ENCODE measurements at regions of chr2 and their contacts with region 1.

Region 1: DNA sequence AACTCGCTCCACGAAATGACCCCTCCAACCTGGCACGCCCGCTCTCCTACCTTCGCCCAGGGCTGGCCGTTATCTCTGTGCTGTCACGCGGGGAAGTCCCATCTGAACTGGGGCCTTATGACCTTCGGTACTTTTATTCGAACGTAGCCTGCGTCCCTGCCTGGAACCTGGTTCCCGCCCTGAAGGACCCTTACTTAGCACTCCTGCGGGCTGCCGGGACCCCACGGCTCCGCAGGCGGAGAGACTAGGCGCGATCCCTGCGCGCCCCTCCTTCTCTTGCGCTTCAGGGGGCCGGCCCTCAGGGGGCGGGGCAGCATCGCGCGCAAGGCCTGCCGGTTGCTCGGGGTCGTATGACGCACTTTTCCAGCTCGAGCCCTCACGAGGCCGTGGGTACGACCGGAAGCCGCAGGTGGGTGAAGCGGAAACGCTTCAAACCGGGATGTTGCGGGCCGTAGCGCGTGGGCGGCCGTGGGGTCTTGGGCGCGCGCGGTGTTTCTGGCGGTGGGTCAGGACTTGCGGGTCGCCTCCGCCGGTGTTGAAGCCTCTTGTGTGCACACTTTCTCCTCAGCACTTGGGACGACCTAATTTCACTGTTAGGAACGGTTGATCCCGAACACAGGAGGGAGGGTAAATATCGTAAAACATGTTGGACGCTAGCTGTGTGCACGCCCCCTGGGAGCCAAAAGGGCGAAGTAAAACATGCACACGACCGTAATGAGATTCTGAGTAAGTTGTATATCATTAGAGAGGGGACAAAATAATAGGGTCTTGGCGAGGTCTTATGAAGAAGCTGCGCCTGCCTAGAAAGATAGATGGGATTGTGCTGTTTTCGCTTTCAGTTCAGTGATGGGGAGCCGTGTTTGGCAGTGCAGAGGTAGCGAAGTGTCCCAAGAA is at the starts of genes LIPT1 and TSGA10:
- DNase-seq: peak; percentile 81 to 98 (median 93)
- ATAC-seq: peak; percentile 94
- H3K4me3 ChIP-seq: peak within 1 kb of the TSS; percentile 80 to 92
- H3K4me3 Mint-ChIP-seq: peak within 1 kb of the TSS; percentile 84
- H3K27ac ChIP-seq: peak within 1 kb of the TSS; percentile 95 to 96
- H3K27ac Mint-ChIP-seq: no peak within 1 kb of the TSS
- H3K4me1 ChIP-seq: peaks cover 28% of the 10 kb centered on the region
- H3K4me1 Mint-ChIP-seq: peaks cover 31% of the 10 kb centered on the region
- H3K27me3 ChIP-seq: no peaks in the 10 kb centered on the region
- H3K27me3 Mint-ChIP-seq: no peaks in the 10 kb centered on the region
- CTCF ChIP-seq: no peak
- total RNA-seq, gene LIPT1: 9.7 to 11.0 TPM
- total RNA-seq, gene TSGA10: 14.4 to 14.9 TPM

Region 2: DNA sequence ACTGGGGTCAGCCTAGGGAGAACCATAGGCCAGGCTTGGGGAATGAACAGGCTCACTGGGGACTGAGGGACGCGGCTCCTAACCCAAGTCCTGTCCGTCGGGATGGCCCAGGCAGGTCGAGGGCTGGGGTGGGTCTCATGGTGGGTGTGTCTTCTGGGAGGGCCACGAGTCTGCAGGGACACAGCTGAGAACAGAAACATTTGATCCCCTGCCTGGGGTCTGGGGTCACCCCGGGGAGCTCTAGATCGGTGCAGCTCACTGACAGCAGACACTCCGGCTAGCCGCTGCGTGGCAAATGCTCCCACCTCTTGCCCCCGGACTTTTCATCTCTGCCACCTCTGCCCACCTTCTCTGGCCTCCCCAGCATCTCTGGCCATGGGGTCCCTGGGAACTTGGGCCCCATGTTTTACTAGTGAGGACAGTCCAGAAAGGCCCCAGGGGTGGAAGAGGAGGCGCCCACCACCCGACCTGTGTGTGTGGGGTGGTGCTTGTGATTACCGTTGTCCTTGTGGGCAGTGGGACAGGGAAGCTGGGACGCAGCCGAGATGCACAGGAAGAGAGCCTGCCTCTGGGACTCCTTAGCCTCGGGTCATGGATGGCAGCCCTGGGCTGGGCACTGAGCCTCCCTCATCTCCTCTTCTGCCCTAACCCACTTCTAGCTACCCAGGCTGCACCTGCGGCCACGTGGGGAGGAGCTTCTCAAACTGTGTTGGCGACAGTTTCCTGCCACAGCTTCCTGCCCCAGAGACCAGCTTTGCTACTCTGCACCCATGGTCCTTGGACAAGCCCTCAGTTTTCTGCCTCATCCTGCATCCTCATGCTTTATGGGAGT is 1436.6 kb before region 1 on chr2:
- CTCF ChIA-PET with region 1: no interaction called
- POLR2A ChIA-PET with region 1: no interaction called
- intact Hi-C with region 1: loop called in 1 of 2 experiments (anchors 10 kb)
- DNase-seq: peak; percentile 58 to 90 (median 80)
- ATAC-seq: peak; percentile 76
- H3K4me3 ChIP-seq: peak overlapping the region; percentile 68 to 91
- H3K4me3 Mint-ChIP-seq: peak overlapping the region; percentile 96
- H3K27ac ChIP-seq: peak overlapping the region; percentile 80 to 88
- H3K27ac Mint-ChIP-seq: peak overlapping the region; percentile 97
- H3K4me1 ChIP-seq: peaks cover 80% of the 10 kb centered on the region
- H3K4me1 Mint-ChIP-seq: peaks cover 85% of the 10 kb centered on the region
- H3K27me3 ChIP-seq: no peaks in the 10 kb centered on the region
- H3K27me3 Mint-ChIP-seq: no peaks in the 10 kb centered on the region
- CTCF ChIP-seq: no peak

Region 3: GRCh38 chr2:98070081-98070480 is 1084.8 kb before region 1 on chr2:
- CTCF ChIA-PET with region 1: no interaction called
- POLR2A ChIA-PET with region 1: no interaction called
- intact Hi-C with region 1: no loop called
- DNase-seq: no peak
- ATAC-seq: no peak
- H3K4me3 ChIP-seq: no peak overlapping the region
- H3K4me3 Mint-ChIP-seq: no peak overlapping the region
- H3K27ac ChIP-seq: no peak overlapping the region
- H3K27ac Mint-ChIP-seq: no peak overlapping the region
- H3K4me1 ChIP-seq: no peaks in the 10 kb centered on the region
- H3K4me1 Mint-ChIP-seq: no peaks in the 10 kb centered on the region
- H3K27me3 ChIP-seq: no peaks in the 10 kb centered on the region
- H3K27me3 Mint-ChIP-seq: peaks cover 13% of the 10 kb centered on the region
- CTCF ChIP-seq: no peak

Region 4: DNA sequence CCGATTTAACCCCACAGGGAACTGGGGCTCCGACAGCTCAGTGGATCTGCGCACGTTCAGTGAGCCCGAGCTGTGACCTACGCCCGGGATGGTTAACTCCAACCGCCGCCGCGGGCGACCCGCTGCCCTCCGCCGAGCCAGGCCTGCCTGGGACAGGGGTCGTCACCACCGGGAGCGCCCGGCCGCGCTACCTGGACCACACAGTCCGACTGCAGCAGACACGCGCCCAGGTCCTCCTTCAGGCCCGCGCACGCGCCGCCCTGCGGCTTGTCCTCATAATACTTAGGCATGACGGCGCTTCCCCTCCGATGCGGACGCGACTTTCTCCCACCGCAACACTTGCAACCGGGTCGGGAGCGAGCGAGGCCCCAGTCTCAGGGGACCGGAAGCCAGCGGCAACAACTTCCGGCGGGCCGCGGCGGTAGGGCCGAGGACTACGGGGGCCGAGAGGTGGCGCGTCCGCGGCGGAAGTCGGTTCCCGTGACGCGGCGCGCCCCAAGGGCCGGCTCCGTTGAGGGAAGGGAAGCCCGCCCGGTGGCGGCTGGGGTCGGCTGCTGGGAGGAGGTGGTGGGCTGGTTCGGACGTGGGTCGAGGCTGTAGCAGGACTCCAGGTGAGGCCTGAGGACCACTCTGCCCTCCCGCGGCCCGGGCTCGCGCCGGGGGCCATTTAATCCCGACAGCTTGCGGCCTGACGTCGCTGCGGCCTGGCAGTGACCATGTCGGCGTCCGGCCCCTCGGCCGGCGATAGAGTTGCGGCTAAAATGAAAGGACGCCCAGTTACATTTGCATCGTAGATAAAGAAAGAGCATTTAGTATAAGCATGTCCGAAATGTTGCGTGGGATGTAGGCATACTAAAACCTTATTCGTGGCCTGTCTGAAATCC is 546.5 kb before region 1 on chr2 and contains the starts of genes COA5 and UNC50:
- CTCF ChIA-PET with region 1: no interaction called
- POLR2A ChIA-PET with region 1: no interaction called
- intact Hi-C with region 1: loop called in 1 of 2 experiments (anchors 10 kb)
- DNase-seq: peak; percentile 84 to 95 (median 89)
- ATAC-seq: peak; percentile 81
- H3K4me3 ChIP-seq: peak within 1 kb of the TSS; percentile 84 to 94
- H3K4me3 Mint-ChIP-seq: peak within 1 kb of the TSS; percentile 89
- H3K27ac ChIP-seq: peak within 1 kb of the TSS; percentile 87 to 95
- H3K27ac Mint-ChIP-seq: peak within 1 kb of the TSS; percentile 95
- H3K4me1 ChIP-seq: peaks cover 48% of the 10 kb centered on the region
- H3K4me1 Mint-ChIP-seq: peaks cover 74% of the 10 kb centered on the region
- H3K27me3 ChIP-seq: no peaks in the 10 kb centered on the region
- H3K27me3 Mint-ChIP-seq: no peaks in the 10 kb centered on the region
- CTCF ChIP-seq: no peak
- total RNA-seq, gene COA5: 19.7 to 24.1 TPM
- total RNA-seq, gene UNC50: 12.5 to 14.4 TPM

Region 5: DNA sequence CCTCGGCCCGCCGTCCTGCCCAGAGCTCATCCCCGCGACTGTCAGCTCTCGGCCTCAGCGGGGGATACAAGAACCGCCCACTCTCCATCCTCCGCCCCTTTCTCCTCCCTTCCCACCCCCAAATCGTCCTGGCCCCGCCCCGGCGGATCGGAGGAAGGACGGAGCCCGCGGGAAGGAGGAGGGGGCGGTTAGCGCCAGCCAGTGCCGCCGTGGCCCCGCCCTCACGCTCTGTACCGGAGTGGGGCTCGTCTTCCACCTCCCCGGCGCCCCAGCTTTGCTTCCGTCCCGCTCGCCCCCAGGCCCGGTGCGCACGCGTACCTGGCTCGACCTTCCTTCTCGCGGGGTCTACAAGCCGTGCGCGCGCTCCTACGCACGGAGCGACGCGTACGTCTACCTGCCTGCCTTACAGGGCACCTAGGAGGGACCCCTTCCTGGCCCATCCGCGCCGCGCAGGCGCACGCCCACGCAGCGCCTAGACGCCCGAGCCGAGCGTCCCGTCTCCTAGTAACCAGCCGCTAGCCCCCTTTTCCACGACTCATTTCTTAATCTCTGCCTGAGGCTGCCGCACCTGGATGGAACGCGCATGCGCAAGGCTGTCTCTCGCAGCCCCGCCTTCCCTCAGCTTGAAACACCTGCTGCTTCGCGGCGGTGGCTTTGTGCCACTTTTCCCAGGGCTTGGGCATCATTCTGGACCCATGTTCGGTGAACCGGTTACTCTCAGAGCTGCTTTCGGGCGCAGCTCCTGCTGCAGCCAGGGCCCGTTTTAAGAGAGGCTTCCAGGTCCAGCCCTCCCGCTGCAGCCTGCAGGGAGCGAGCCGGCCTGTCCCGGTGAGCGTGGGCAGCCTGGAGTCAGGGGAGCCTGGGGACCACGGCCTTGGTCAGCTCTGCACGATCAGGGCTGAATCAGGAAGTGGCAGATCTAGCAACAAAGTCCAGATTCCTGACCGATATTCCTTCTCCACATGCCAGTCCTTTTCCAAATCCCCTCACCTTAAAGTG is 13.5 kb before region 1 on chr2 and contains the start of gene C2orf15:
- CTCF ChIA-PET with region 1: interaction called, 10 read pairs
- POLR2A ChIA-PET with region 1: interaction called, 56 read pairs
- intact Hi-C with region 1: loop called (anchors 1 kb)
- DNase-seq: peak; percentile 91 to 98 (median 97)
- ATAC-seq: peak; percentile 88
- H3K4me3 ChIP-seq: peak within 1 kb of the TSS; percentile 86 to 97
- H3K4me3 Mint-ChIP-seq: peak within 1 kb of the TSS; percentile 88
- H3K27ac ChIP-seq: peak within 1 kb of the TSS; percentile 90 to 91
- H3K27ac Mint-ChIP-seq: peak within 1 kb of the TSS; percentile 96
- H3K4me1 ChIP-seq: peaks cover 14% of the 10 kb centered on the region
- H3K4me1 Mint-ChIP-seq: peaks cover 25% of the 10 kb centered on the region
- H3K27me3 ChIP-seq: no peaks in the 10 kb centered on the region
- H3K27me3 Mint-ChIP-seq: no peaks in the 10 kb centered on the region
- CTCF ChIP-seq: no peak
- total RNA-seq, gene C2orf15: 1.3 to 1.8 TPM

Measured in CD8-positive, alpha-beta T cell (primary cell).